ENCODE measurements at regions of chr5 and their contacts with region 1.

Region 1: GRCh38 chr5:159915904-159916840 is at the start of gene ADRA1B:
- DNase-seq: peak; percentile 85
- H3K4me3 ChIP-seq: peak within 1 kb of the TSS in 3 of 4 donors; percentile 42 to 55 (median 48)
- H3K27ac ChIP-seq: peak within 1 kb of the TSS in 3 of 4 donors; percentile 11 to 50 (median 21)
- H3K4me1 ChIP-seq: peaks cover 0 to 31% (median 17%) of the 10 kb centered on the region in 4 donors
- H3K27me3 ChIP-seq: peaks cover 0 to 11% (median 3%) of the 10 kb centered on the region in 3 donors
- CTCF ChIP-seq: peak in 1 of 4 experiments; percentile 48
- EP300 ChIP-seq: no peak
- POLR2A ChIP-seq: no peak
- total RNA-seq, gene ADRA1B: 0.36 to 1.8 (median 0.61) TPM

Region 2: DNA sequence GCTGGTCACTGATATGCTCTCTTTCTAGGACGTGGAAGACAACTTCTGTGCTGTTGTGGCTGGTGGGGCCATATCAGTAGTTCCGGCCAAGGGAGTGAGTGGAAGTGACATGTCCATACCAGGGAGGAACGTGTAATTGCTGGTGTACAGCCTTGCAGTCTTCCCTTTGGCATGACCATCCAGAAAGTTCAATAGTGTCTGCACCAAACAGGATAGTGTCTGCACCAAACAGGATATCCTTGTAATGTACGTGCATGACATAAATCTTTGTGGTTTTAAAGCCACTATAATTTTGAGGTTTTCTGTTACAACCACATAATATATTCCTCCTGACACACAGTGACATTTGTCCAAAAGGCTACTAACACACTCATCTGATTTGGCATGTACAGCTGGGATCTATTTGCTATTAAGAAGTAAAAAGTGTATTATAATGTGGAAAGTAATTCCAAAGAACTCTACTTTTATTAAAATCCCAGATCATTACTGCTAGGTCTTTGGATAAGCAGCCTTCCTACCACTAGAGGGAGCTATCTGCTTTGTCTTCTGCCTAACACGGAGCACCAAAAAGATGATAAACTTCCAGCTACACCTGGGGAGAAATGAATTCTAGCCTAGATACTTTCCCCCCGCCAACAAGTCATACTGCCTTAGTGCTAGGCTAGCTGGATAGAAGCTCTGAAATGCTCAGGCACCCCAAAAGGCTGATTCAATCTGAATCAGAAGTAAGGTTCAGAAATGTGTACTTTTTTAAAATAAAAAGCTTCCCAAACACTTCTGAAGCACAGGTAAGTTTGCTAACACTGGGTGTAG is 759.5 kb before region 1 on chr5:
- intact Hi-C with region 1: loop called (anchors 5 kb)
- DNase-seq: no peak
- H3K4me3 ChIP-seq: no peak overlapping the region
- H3K27ac ChIP-seq: no peak overlapping the region
- H3K4me1 ChIP-seq: no peaks in the 10 kb centered on the region
- H3K27me3 ChIP-seq: no peaks in the 10 kb centered on the region
- CTCF ChIP-seq: peak; percentile 37 to 82 (median 70)
- EP300 ChIP-seq: no peak
- POLR2A ChIP-seq: no peak

Region 3: GRCh38 chr5:159444441-159445082 is 471.6 kb before region 1 on chr5:
- intact Hi-C with region 1: loop called (anchors 5 kb)
- DNase-seq: no peak
- H3K4me3 ChIP-seq: no peak overlapping the region
- H3K27ac ChIP-seq: no peak overlapping the region
- H3K4me1 ChIP-seq: no peaks in the 10 kb centered on the region
- H3K27me3 ChIP-seq: no peaks in the 10 kb centered on the region
- CTCF ChIP-seq: peak in 2 of 4 experiments; percentile 19
- EP300 ChIP-seq: no peak
- POLR2A ChIP-seq: no peak

Region 4: DNA sequence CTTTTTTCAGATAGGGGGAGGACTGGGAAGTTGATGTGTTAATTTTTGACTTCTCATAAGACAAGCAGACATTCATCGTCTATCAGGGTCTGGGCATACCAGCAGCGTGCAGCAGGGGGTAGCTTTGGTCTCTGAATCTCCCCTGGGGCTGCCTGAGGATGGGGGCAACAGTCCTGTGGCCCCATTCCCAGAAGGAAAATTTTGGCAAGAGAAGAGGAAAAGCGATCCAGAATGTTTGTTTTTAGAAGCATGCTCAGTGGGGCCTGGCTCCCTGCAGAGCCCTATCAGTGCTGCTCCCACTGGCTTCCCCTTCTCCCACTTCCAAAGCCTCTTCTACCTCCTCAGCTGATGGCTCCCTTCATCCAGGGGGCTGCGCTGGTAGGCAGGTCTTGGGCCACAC is 391.1 kb before region 1 on chr5:
- intact Hi-C with region 1: loop called (anchors 10 kb)
- DNase-seq: no peak
- H3K4me3 ChIP-seq: no peak overlapping the region
- H3K27ac ChIP-seq: no peak overlapping the region
- H3K4me1 ChIP-seq: no peaks in the 10 kb centered on the region
- H3K27me3 ChIP-seq: no peaks in the 10 kb centered on the region
- CTCF ChIP-seq: no peak
- EP300 ChIP-seq: no peak
- POLR2A ChIP-seq: no peak

Region 5: GRCh38 chr5:159786901-159787691 is 129.1 kb before region 1 on chr5:
- intact Hi-C with region 1: loop called (anchors 10 kb)
- DNase-seq: peak; percentile 92
- H3K4me3 ChIP-seq: no peak overlapping the region
- H3K27ac ChIP-seq: peak overlapping the region in 3 of 4 donors; percentile 45 to 69 (median 59)
- H3K4me1 ChIP-seq: no peaks in the 10 kb centered on the region
- H3K27me3 ChIP-seq: no peaks in the 10 kb centered on the region
- CTCF ChIP-seq: no peak
- EP300 ChIP-seq: peak in 2 of 4 donors; percentile 63 to 65
- POLR2A ChIP-seq: no peak

Measured in sigmoid colon (tissue), 7 donors.